HAP-1 (cell line): ENCODE measurements at regions of chr19 and their contacts with region 1.

Region 1: GRCh38 chr19:35247526-35248306 is 1.1 kb upstream of the LSR start:
- DNase-seq: peak; percentile 73 to 93
- H3K4me3 ChIP-seq: peak overlapping the region; percentile 98
- H3K4me1 ChIP-seq: peaks cover 2% of the 10 kb centered on the region
- H3K27me3 ChIP-seq: no peaks in the 10 kb centered on the region

Region 2: DNA sequence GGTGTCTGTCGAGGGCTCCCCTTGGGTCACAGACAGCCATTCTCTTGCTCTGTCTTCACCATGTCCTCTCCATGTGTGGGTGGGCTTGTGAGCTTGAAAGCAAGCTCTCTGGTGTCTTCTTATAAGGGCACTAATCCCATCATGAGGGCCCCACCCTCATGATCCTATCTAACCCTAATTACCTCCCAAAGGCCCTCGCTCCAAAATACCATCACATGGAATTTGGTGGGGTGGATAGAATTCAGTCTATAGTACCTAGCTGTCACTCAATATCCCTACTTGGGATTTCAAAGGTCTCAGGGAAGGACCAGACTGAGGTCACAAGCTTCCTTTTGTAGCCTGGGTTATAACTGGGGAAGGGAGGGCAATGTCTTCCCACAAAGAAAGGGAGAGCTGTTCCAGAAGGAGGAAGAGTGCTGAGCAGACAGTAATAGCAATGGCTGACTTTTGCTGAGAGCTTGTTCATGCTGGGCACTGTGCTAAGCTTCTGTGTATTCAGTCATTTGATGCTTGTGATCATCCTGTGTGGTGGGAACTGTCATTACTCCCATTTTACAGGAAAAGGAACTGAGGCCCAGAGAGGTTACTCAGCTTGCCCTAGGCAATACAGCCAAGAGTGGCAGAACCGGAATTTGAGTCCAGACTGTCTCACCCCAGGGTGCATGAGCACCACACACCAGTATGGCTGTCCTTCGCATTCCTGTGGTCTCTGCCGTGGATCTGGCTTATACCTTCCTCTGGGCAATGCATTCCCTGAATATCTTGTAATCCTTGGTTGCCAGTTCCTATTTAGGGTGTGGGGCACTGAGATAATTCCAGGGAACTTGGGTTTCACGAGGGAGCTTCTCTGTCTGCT is 85.0 kb before region 1 on chr19:
- in situ Hi-C with region 1: loop called (anchors 5 kb)
- DNase-seq: no peak
- H3K4me3 ChIP-seq: no peak overlapping the region
- H3K4me1 ChIP-seq: no peaks in the 10 kb centered on the region
- H3K27me3 ChIP-seq: no peaks in the 10 kb centered on the region